KBM-7 (cell line): ENCODE measurements at regions of chr4 and their contacts with region 1.

Region 1: DNA sequence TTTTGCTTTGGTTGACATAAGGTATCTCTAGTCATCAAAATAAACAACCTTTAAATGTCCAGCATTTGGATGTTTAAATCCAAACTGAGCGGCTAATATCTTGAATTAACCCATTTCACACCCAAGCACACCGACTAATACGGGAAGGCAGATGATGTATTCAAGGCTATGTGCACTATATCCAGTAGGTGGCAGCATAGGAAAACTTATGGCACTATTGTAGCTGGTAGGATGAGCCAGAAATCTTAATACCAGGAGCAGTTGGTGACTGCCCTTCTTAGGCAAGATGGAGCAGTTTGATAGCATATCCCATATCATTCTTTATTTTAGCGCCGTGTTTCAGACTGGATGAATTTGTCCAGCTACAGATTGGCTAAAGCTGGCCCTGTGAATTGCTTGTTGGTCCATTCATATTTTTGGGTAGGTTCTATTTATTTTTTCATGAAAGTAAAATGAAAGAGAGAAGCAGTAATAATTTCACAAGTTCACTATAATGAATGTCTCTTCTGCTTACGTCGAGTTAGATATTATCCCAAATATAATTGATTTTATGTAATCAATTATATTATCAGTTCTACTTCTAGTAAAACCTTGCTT is 24.4 kb downstream of the UCHL1 start:
- DNase-seq: peak; percentile 79

Region 2: GRCh38 chr4:41661442-41662076 is 380.4 kb after region 1 on chr4:
- in situ Hi-C with region 1: loop called (anchors 25 kb)
- DNase-seq: peak; percentile 60